Ascending aorta (tissue), 2 donors: ENCODE measurements at regions of chr1 and their contacts with region 1.

Region 1: DNA sequence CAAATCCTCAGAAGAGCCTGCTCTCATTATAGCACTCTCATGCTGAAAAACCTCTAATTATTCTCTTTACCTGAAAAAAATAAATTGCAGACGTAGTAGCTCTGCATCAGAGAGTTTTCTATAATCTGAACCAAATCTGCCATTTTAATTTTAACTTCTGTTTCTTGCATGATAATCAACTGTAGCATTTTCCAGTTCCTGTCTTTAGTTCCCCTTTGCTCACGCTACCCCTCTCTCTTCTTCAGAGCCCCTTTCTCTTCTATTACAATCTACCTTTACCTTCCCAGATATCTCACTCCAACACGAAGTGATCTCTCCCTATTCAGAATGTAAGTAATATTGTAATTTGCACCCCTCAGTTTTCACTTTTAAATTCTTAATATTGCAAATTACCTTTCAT is 31.4 kb downstream of the FMO1 start:
- DNase-seq: no peak
- H3K4me3 ChIP-seq: no peak overlapping the region
- H3K27ac ChIP-seq: no peak overlapping the region
- H3K4me1 ChIP-seq: no peaks in the 10 kb centered on the region
- H3K27me3 ChIP-seq: no peaks in the 10 kb centered on the region
- CTCF ChIP-seq: no peak

Region 2: DNA sequence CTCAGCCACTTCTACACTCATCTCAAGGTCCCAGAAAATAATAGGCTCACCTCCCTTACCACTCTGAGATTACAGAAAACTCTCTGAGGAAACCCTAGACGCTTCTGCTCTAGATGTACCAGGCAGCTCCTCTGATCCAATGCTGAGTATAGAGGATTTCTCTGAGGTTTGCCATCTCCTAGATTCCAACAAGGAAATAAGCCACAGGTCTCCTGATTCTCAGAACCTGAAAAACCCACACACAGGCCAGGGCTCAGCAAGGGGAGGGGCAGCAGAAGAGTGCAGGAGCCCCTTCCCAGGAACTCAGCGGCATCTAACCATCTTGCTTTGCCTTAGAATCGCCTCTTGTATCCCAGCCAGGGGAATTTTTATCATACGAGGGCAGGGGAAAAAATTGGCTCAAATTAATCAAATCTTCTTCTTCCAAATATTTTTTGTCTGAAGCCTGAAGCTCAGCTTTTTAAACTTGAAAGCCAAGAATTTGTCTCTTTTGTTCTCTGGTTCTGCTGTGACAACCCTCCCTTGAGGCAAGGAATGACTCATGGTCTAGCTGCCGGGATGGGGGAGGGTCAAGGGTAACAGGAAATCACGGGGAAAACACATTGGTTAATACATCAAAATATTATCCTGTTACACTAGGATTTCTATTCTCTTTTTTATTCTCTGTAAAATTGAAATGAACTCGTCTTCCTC is 716.9 kb before region 1 on chr1:
- intact Hi-C with region 1: no loop called
- DNase-seq: peak; percentile 53 to 82
- H3K4me3 ChIP-seq: peak overlapping the region; percentile 17 to 48
- H3K27ac ChIP-seq: peak overlapping the region; percentile 74 to 78
- H3K4me1 ChIP-seq: peaks cover 4 to 23% of the 10 kb centered on the region in 2 donors
- H3K27me3 ChIP-seq: no peaks in the 10 kb centered on the region
- CTCF ChIP-seq: no peak

Region 3: DNA sequence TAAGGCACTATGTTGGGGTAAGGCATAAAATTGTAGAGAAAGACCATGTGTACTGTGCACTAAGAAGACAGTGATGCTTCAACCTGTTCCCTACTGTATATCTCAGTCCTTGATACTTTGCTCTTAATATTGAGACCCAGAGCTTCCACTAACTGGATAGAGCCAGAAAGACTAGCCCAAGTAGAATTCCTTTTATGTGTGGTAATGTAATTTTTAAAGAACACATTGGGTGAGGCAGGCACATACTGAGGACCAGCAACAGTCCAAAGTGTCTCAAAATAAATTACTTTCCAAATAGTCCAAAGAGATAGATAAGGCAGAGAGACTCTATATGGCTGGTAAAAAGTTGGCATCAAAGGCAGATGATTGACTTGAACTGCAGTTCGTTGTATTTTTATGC is 375.7 kb before region 1 on chr1:
- intact Hi-C with region 1: no loop called
- DNase-seq: no peak
- H3K4me3 ChIP-seq: no peak overlapping the region
- H3K27ac ChIP-seq: peak overlapping the region; percentile 36 to 52
- H3K4me1 ChIP-seq: peaks cover 0 to 3% of the 10 kb centered on the region in 2 donors
- H3K27me3 ChIP-seq: no peaks in the 10 kb centered on the region
- CTCF ChIP-seq: no peak

Region 4: GRCh38 chr1:171233190-171233589 is 46.5 kb before region 1 on chr1:
- intact Hi-C with region 1: loop called (anchors 2 kb)
- DNase-seq: no peak
- H3K4me3 ChIP-seq: no peak overlapping the region
- H3K27ac ChIP-seq: no peak overlapping the region
- H3K4me1 ChIP-seq: no peaks in the 10 kb centered on the region
- H3K27me3 ChIP-seq: no peaks in the 10 kb centered on the region
- CTCF ChIP-seq: no peak